ENCODE measurements at regions of chr11 and their contacts with region 1.

Region 1: GRCh38 chr11:117316197-117316961 is at the start of gene BACE1:
- DNase-seq: no peak
- H3K4me3 Mint-ChIP-seq: peak within 1 kb of the TSS; percentile 70
- H3K27ac Mint-ChIP-seq: no peak within 1 kb of the TSS
- H3K4me1 Mint-ChIP-seq: peaks cover 4% of the 10 kb centered on the region
- H3K27me3 Mint-ChIP-seq: peaks cover 59% of the 10 kb centered on the region
- total RNA-seq, gene BACE1: 0.11 and 0.32 TPM in 2 replicates

Region 2: GRCh38 chr11:117199061-117199915 is 117.1 kb before region 1 on chr11 and contains the start of gene TAGLN:
- intact Hi-C with region 1: no loop called
- DNase-seq: no peak
- H3K4me3 Mint-ChIP-seq: no peak within 1 kb of the TSS
- H3K27ac Mint-ChIP-seq: no peak within 1 kb of the TSS
- H3K4me1 Mint-ChIP-seq: no peaks in the 10 kb centered on the region
- H3K27me3 Mint-ChIP-seq: no peaks in the 10 kb centered on the region
- total RNA-seq, gene TAGLN: 3.1 and 3.8 TPM in 2 replicates

Region 3: DNA sequence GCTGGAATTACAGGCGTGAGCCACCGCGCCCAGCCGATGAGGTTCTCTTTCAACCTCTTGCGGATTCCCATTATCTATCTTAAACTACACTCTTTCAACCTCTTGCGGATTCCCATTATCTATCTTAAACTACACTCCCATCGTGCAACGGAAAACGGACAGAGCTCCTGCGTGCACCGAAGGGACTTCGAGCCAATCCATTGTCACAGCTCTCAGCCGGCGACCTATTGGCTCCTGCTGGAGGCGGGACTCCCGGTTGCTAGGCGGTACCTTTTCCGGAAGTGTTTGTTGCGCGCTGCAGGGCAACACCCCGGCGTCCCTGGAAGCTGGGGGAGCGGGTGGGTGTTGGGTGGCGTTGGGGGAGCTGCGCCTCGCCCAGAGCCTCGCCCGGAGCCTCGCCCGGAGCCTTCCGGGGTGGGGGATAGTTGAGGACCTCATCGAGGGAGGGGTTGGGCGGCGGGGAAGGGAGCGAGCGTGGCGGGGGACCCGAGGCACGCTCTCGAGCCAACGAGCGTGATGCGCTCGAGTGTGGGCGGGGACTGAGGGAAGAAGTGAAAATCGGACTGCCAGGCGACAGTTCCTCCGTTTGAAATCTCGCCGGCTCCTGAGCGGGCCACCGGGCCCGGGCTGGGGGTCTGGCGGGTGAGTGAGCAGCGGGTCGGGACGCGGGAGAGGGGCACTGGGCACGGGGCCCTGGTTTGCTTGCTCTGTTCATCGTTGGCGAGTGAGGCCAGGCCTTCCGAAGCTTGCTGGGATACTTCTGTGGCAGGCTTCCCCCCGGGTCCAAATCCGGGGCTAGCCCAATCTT is 11.4 kb after region 1 on chr11 and contains the start of gene CEP164:
- intact Hi-C with region 1: loop called (anchors 1 kb)
- DNase-seq: peak; percentile 95
- H3K4me3 Mint-ChIP-seq: peak within 1 kb of the TSS; percentile 60
- H3K27ac Mint-ChIP-seq: peak within 1 kb of the TSS; percentile 56
- H3K4me1 Mint-ChIP-seq: peaks cover 8% of the 10 kb centered on the region
- H3K27me3 Mint-ChIP-seq: peaks cover 4% of the 10 kb centered on the region
- total RNA-seq, gene CEP164: 32.3 and 34.2 TPM in 2 replicates